ENCODE measurements at regions of chr5 and their contacts with region 1.

Region 1: DNA sequence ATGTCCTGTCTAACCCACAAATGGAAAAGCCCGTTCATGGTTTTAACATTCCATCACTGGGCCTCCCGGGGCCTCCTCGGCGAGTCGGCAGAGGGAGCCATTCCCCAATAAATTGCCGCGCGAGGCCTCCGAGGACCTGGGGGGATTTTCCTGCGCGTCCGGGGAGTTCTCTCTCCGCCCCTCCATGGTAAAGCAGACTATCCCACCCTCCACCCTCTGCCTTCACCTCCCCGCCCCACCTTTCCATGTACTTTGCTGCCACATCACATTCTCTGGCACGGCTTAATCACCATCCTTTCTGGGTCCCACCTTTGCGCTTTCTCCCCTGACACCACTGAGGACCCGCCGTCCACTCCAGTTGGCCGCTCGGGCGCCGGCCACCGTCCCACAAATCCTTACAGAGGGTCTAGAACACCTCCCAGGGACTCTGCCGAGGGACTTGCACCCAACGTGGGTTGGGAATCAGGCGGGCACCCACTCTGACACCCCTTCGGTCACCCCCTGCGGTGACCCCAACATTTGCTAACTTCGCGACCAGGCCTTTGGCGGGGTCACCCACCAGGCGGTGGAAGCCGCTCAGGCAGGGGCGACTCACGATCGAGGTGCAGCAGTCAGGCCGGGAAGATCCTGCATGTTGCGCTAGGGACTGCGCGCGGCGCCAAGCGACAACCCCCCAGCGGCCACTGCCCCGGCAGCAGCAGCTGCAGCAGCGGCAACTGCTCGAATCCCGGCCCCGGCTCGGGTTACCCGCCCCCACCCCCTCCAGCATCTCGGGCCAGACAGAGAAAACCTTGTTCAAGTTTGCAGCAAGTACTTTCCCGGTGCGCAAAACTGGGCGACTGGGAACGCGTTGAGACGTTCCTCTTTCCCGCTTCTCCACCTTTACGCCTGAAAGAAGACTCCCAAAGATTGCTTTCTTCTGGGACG is at the start of gene MEGF10:
- DNase-seq: peak; percentile 55 to 96 (median 75)

Region 2: DNA sequence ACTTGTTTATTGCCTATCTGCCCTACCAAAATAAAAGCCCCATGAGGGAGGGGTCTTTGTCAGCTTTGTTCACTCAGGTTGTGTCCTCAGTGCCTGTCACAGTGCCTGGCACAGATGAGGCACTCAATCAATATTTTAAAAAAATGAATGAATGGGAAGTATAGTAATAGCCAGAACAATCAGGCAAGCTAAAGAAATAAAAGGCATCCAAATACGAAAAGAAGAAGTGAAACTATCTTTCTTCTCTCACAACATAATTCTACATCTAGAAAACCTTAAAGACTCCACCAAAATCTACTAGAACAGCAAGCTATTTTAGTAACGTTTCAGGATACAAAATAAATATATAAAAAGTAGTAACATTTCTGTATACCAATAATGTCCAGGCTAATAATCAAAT is 179.2 kb before region 1 on chr5:
- intact Hi-C with region 1: no loop called
- DNase-seq: no peak

Region 3: DNA sequence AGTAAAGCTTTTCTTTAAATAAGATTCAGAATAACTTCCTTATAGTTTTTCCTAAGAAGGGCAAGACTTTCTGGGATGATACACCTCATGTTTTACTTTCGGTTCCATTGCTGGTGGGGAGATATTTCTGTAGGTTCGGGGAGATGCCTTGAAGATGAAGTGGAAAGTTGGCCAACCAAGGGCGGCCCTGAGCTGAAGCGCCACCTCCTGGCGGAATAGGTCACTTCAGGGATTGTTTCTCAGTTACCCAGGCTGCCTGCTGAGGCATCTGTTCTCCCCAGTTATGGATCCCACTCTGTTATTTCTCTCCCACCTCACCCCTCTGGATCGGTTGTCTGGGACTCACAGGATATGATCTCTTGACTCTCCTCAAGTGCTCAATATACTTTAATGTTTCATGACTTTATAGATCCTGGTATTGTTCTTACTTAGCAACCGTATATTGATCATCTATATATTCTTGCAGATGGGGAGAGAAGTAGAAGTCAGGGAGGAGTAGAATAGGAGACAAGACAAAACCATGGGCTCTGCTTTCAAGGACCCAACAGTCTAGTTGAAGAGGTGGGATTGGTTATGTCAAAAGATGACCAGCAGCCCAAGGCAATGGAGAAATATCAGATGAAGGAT is 23.7 kb after region 1 on chr5:
- intact Hi-C with region 1: loop called (anchors 1 kb)
- DNase-seq: peak in 9 of 10 donors; percentile 37 to 93 (median 73)

Region 4: GRCh38 chr5:127358740-127359139 is 68.5 kb after region 1 on chr5:
- intact Hi-C with region 1: loop called (anchors 10 kb)
- DNase-seq: no peak

Region 5: DNA sequence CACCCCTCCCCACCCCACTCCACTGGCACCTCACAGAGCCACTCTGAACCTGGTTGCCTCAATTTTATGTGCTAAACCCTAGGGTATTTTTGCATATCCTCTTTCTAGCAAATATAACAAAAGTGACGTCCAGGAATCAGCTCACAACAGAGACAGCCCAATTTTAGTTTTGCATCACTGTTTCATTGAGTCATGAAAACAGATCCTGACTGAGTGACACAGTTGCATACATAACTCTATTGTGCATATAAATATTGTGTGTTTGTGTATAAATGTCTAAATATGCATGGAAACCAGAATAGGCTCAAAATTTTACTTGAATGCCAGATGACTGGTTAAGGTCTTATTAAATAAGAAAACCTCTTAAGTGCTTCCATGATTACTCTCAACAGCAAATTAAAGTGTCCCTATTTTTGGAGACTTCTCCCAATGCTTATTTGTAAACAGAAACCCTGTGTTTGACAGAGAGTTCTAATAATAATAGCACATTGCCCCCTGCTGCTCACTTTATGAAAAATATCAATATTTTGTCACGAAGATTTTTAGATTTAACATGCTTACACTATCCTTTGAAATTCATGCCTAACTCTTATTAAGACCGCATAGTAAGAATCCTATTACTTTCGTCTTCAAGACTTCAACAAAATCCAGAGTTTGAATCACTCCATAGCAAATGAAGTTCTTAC is 151.7 kb after region 1 on chr5:
- intact Hi-C with region 1: loop called (anchors 1 kb)
- DNase-seq: no peak

Region 6: DNA sequence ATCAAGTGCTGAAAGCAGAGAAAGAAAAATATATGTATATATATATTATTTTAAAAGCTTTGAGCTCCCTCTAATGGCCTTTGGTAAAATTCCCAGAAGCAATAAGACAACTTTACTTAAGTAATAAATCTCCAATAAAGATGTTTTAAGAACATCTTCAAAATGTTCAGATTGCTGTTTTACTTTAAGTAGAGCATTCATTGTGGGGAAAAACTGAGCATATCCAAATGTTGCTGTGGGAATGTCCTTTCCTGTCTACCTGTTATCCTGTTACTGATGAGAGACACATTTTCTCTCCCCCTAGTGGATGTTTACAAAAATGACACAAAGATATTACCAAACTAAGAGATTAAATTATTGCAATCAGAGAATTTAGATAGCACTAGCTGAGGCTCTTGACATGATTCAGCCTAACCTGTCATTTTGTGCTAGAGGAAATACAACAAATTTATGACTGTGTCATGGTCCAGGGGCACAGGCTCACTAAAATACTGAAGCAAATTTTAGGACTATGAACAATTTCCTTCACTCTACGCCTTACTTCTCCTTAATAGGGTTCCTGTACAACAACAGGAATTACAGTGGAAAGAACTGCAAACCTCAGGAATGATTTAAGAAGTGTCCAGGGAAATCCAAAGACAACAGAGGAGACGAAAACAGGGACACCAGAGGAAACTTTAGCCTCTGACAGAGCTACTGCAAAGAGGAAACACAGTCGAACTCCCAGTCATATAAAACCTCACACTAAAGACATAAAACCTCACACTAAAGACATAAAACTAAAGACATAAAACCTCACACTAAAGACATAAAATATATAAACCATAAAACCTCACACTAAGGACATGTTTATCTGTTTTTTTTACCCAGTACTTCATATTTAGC is 202.8 kb after region 1 on chr5:
- intact Hi-C with region 1: loop called (anchors 1 kb)
- DNase-seq: no peak

Region 7: DNA sequence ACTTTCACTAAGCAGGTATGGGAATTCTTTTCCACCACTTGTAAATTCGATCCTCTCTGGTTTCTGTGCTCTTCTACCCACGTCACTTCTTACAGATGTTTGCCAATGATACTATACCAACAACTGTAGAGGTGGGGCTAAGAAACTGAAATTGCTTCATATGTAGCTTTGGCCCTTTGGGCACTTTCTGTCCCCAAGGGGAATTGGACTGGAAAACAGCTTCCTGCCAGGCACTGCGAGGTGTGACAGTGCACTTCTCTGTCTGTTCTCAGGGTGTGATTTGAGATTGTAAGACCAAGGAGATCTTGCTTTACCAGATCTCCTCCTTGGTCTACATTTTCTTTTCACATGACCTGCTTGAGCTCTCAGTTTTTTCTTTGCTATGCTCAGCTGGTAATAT is 577.1 kb after region 1 on chr5:
- intact Hi-C with region 1: no loop called
- DNase-seq: no peak